ENCODE measurements at regions of chr15 and their contacts with region 1.

Region 1: DNA sequence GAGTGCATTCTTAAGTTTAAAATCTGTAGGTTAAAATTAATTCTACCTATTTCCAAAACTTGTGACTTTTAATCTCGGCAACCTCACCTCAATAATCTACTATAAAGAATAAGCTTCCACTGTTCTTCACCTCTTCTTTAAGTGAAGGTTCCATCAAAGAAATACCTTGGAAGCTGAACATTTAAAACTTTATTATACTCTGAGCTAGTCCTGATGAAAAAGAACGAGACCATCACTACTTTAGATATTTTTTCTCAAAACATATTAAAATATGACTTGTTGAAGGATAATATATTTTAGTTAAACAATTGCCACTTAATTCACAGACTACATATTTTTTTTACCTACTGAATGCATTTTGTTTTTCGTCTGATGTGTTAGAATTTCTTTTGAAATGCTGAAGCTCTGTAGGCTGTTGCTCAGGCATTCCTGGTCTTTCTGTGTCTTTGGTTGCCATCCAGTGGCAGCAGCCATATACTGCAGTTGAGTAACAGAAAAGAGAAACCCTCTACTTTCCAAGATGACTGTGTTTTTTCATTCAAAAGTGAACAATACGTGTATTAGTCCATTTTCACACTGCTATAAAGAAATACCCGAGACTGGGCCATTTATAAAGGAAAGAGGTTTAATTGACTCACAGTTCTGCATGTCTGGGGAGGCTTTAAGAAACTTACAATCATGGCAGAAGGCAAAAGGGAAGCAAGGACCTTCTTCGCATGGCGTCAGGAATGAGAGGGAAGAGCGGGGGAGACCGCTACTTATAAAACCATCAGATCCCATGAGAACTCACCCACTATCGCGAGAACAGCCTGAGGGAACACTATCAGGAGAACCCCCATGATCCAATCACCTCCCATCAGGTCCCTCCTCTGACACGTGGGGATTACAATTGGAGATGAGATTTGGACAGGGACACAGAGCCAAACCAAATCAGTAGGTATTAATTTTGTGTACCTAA is 4.5 kb upstream of the GOLGA8B start:
- DNase-seq: no peak
- ATAC-seq: peak; percentile 41
- H3K4me3 ChIP-seq: peak overlapping the region; percentile 21; the same call in 1 of the 2 replicates
- H3K27ac ChIP-seq: no peak overlapping the region
- H3K4me1 ChIP-seq: no peaks in the 10 kb centered on the region
- H3K27me3 ChIP-seq: no peaks in the 10 kb centered on the region
- CTCF ChIP-seq: peak; percentile 67 to 88 (median 76)
- EP300 ChIP-seq: no peak
- POLR2A ChIP-seq: peak; percentile 56
- RAD21 ChIP-seq: peak; percentile 93

Region 2: GRCh38 chr15:34055853-34056595 is 532.0 kb before region 1 on chr15:
- CTCF ChIA-PET with region 1: interaction called, 3 read pairs
- POLR2A ChIA-PET with region 1: no interaction called
- RAD21 ChIA-PET with region 1: interaction called, 10 read pairs
- SMC1A ChIA-PET with region 1: no interaction called
- in situ Hi-C with region 1: loop called (anchors 25 kb)
- intact Hi-C with region 1: loop called (anchors 10 kb)
- DNase-seq: no peak
- ATAC-seq: no peak
- H3K4me3 ChIP-seq: no peak overlapping the region
- H3K27ac ChIP-seq: no peak overlapping the region
- H3K4me1 ChIP-seq: no peaks in the 10 kb centered on the region
- H3K27me3 ChIP-seq: no peaks in the 10 kb centered on the region
- CTCF ChIP-seq: no peak
- EP300 ChIP-seq: no peak
- POLR2A ChIP-seq: no peak
- RAD21 ChIP-seq: no peak

Region 3: DNA sequence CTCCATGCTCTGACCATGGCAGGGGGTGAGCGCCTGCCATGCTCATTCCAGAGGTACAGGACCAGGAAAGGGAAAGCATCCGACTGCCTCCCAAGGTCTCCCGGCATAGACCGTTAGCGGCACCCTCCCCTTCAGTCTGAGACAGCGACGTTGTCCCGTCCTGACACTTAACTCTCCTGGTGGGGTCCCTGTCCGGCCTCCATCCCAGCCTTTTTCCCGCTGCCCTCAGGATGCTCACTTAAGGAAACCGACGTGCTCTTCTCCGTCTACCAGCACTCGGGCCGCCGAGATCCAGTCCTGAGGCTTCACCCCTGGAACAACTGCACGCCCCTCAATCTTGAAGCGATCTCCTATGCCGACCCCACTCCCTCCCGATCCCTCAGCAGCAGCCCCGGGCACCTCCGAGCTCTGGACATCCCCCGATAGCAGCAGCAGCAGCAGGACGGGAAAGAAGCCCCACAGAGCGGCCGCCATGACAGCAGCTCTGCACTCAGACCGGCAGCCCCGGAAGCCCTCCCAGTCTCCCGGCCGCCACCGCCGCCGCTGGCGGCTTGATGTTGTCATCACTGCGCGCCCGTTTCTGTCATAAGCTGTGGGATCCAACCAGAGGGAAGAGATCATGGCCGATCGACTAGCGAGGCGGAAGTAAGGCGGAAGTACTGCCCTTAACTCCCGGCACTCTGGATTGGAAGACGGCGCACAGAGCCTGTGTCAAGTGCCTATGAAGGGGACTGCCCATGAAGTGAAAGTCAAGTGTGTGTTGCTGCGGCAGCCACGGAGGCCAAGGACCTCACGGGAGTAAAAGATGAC is 486.4 kb before region 1 on chr15 and contains the starts of genes EMC7 and PGBD4:
- CTCF ChIA-PET with region 1: interaction called, 4 read pairs
- POLR2A ChIA-PET with region 1: no interaction called
- RAD21 ChIA-PET with region 1: no interaction called
- SMC1A ChIA-PET with region 1: interaction called, 3 read pairs
- in situ Hi-C with region 1: no loop called
- intact Hi-C with region 1: loop called (anchors 10 kb)
- DNase-seq: peak; percentile 97
- ATAC-seq: peak; percentile 98
- H3K4me3 ChIP-seq: peak within 1 kb of the TSS; percentile 92
- H3K27ac ChIP-seq: peak within 1 kb of the TSS; percentile 77
- H3K4me1 ChIP-seq: 0 out of 2 replicates have a peak, but pooled peaks cover 4% of the 10 kb centered on the region
- H3K27me3 ChIP-seq: no peaks in the 10 kb centered on the region
- CTCF ChIP-seq: no peak
- EP300 ChIP-seq: peak in 1 of 2 experiments; percentile 10; a peak in 1 of 4 replicates
- POLR2A ChIP-seq: peak; percentile 97
- RAD21 ChIP-seq: no peak
- polyA plus RNA-seq, gene EMC7: 16.5 to 49.3 TPM
- polyA plus RNA-seq, gene PGBD4: 1.2 to 1.6 TPM

Region 4: DNA sequence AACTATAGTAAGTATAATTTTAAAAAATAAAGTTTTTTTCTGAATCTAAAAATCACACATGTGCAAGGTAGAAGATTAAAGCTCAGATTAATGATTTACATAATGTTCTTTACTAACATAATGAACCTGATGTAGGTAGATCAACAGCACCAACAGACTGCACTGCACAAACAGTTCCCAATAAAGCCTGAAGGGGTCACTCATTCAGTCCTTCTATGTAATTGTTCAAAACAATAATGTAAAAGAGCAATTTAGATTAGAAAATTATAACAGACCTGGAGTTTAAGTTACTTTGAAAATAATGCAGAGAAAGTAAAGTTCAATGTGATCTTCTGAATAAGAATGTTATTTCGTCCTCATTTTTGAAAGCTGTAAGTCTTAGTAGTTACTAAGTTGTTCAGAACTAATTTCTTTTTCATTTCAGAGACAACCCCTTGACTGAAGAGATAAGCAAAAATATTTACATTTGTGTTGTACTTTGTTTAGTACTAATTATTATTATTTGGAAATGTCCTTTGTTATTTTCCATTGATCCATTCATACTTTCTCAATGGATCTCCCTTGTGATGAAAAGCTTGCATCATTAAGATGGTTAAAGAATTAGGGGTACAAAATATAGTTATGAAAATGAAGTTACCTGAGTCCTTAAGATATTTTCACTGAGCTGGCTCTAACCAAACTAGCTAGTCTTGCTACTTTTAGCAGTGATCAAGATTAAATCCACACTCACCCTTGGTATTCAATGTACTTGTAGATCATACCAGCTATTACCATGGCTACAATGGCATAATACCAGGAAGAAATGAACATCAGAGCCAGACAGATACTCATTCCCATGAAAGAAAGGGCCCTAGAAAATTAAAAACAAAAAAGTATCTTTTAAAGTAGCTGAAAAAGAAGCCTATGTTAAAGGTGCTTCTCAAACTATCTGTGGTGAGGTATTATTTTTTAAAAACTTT is 346.3 kb before region 1 on chr15:
- CTCF ChIA-PET with region 1: interaction called, 15 read pairs
- POLR2A ChIA-PET with region 1: no interaction called
- RAD21 ChIA-PET with region 1: interaction called, 4 read pairs
- SMC1A ChIA-PET with region 1: interaction called, 9 read pairs
- in situ Hi-C with region 1: loop called (anchors 25 kb)
- intact Hi-C with region 1: loop called (anchors 5 kb)
- DNase-seq: no peak
- ATAC-seq: peak; percentile 89
- H3K4me3 ChIP-seq: no peak overlapping the region
- H3K27ac ChIP-seq: no peak overlapping the region
- H3K4me1 ChIP-seq: peaks cover 5% of the 10 kb centered on the region
- H3K27me3 ChIP-seq: no peaks in the 10 kb centered on the region
- CTCF ChIP-seq: peak; percentile 61 to 70 (median 68)
- EP300 ChIP-seq: no peak
- POLR2A ChIP-seq: no peak
- RAD21 ChIP-seq: peak; percentile 66

Region 5: DNA sequence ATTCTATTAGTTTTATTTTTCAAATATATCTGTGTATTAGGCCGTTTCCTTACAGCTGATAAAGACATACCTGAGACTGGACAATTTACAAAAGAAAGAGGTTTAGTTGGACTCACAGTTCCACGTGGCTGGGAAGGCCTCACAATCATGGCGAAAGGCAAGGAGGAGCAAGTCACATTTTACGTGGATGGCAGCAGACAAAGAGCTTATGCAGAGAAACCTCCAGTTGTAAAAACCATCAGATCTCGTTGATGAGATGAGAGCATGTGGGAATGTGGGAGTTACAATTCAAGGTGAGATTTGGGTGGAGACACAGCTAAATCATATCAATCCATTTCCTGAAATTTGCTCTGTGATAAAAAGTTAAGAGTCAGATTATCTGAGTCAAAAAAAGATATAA is 148.1 kb before region 1 on chr15:
- CTCF ChIA-PET with region 1: no interaction called
- POLR2A ChIA-PET with region 1: no interaction called
- RAD21 ChIA-PET with region 1: interaction called, 4 read pairs
- SMC1A ChIA-PET with region 1: interaction called, 3 read pairs
- in situ Hi-C with region 1: no loop called
- intact Hi-C with region 1: loop called (anchors 5 kb)
- DNase-seq: no peak
- ATAC-seq: no peak
- H3K4me3 ChIP-seq: no peak overlapping the region
- H3K27ac ChIP-seq: no peak overlapping the region
- H3K4me1 ChIP-seq: peaks cover 4% of the 10 kb centered on the region; the same call in 1 of the 2 replicates
- H3K27me3 ChIP-seq: no peaks in the 10 kb centered on the region
- CTCF ChIP-seq: no peak
- EP300 ChIP-seq: no peak
- POLR2A ChIP-seq: no peak
- RAD21 ChIP-seq: no peak

Region 6: DNA sequence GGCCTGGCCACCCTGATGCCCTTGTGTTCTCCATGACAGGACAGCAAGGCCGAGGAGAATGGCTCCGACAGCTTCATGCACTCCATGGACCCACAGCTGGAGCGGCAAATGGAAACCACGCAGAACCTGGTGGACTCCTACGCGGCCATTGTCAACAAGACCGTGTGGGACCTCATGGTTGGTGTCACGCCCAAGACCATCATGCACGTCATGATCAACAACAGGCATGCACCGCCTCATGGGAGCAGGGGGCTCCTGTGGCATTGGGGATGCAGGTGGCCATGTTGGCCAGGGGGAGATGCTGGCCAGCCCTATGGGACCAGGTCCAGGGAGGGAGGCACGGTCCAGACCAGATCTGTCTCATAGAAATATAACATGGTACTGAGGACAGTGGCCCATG is 67.4 kb before region 1 on chr15:
- CTCF ChIA-PET with region 1: interaction called, 13 read pairs
- POLR2A ChIA-PET with region 1: no interaction called
- RAD21 ChIA-PET with region 1: interaction called, 6 read pairs
- SMC1A ChIA-PET with region 1: interaction called, 4 read pairs
- in situ Hi-C with region 1: no loop called
- intact Hi-C with region 1: loop called (anchors 10 kb)
- DNase-seq: no peak
- ATAC-seq: no peak
- H3K4me3 ChIP-seq: no peak overlapping the region
- H3K27ac ChIP-seq: no peak overlapping the region
- H3K4me1 ChIP-seq: peaks cover 5% of the 10 kb centered on the region; the same call in 1 of the 2 replicates
- H3K27me3 ChIP-seq: no peaks in the 10 kb centered on the region
- CTCF ChIP-seq: no peak
- EP300 ChIP-seq: no peak
- POLR2A ChIP-seq: no peak
- RAD21 ChIP-seq: no peak

Region 7: GRCh38 chr15:34650177-34650576 is 62.2 kb after region 1 on chr15:
- CTCF ChIA-PET with region 1: no interaction called
- POLR2A ChIA-PET with region 1: no interaction called
- RAD21 ChIA-PET with region 1: no interaction called
- SMC1A ChIA-PET with region 1: no interaction called
- in situ Hi-C with region 1: no loop called
- intact Hi-C with region 1: no loop called
- DNase-seq: no peak
- ATAC-seq: peak; percentile 32; the same call in 2 of the 3 replicates
- H3K4me3 ChIP-seq: no peak overlapping the region
- H3K27ac ChIP-seq: no peak overlapping the region
- H3K4me1 ChIP-seq: no peaks in the 10 kb centered on the region
- H3K27me3 ChIP-seq: no peaks in the 10 kb centered on the region
- CTCF ChIP-seq: no peak
- EP300 ChIP-seq: no peak
- POLR2A ChIP-seq: no peak
- RAD21 ChIP-seq: no peak

Region 8: GRCh38 chr15:34693053-34693744 is 105.2 kb after region 1 on chr15:
- CTCF ChIA-PET with region 1: no interaction called
- POLR2A ChIA-PET with region 1: no interaction called
- RAD21 ChIA-PET with region 1: no interaction called
- SMC1A ChIA-PET with region 1: no interaction called
- in situ Hi-C with region 1: no loop called
- intact Hi-C with region 1: no loop called
- DNase-seq: no peak
- ATAC-seq: no peak
- H3K4me3 ChIP-seq: no peak overlapping the region
- H3K27ac ChIP-seq: no peak overlapping the region
- H3K4me1 ChIP-seq: no peaks in the 10 kb centered on the region
- H3K27me3 ChIP-seq: no peaks in the 10 kb centered on the region
- CTCF ChIP-seq: no peak
- EP300 ChIP-seq: no peak
- POLR2A ChIP-seq: no peak
- RAD21 ChIP-seq: no peak